ENCODE measurements at regions of chr10 and their contacts with region 1.

Region 1: DNA sequence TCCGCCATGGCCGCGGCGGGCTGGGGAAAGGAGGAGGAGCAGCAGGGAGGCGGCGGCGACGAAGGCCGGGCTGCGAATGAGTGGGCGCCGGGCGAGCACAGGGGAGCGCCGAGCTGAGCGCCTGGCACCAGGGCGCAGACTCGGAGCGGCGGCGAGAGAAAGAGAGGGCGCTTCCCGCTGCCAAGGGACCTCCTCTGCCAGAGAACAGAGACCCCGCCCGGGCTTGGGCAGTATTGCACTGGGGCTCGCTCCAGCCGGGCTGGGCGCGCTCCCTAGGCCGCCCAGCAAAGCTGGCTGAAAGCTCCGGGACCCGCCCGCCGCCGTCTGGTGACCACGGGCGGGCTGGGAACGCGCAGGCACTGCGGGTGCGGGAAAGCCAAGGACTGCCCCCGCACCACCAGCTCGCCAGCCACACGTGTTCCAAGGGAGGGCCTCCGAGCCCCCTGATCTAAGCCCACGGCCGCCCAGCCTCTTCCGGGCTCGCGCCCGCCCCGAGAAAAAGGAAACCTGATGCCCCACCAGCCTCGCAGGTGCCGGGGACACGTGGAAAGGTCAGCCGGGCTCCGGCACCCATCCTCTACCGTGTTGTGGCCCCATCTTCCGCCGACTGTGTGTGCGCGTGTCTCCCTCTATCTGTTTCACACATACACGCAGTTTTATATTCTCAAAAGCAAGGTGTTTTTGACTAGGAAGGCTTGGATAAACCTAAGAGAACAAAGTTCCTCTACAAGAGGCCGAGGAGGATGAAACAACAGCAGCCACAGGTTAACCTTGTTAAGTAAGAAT is at the start of gene CCDC6:
- DNase-seq: peak; percentile 91
- ATAC-seq: peak; percentile 81
- H3K4me3 Mint-ChIP-seq: peak within 1 kb of the TSS; percentile 95
- H3K27ac Mint-ChIP-seq: peak within 1 kb of the TSS; percentile 95
- H3K4me1 Mint-ChIP-seq: peaks cover 59% of the 10 kb centered on the region
- H3K27me3 Mint-ChIP-seq: no peaks in the 10 kb centered on the region
- CTCF ChIP-seq: no peak
- total RNA-seq, gene CCDC6: 27.9 and 32.2 TPM in 2 replicates

Region 2: DNA sequence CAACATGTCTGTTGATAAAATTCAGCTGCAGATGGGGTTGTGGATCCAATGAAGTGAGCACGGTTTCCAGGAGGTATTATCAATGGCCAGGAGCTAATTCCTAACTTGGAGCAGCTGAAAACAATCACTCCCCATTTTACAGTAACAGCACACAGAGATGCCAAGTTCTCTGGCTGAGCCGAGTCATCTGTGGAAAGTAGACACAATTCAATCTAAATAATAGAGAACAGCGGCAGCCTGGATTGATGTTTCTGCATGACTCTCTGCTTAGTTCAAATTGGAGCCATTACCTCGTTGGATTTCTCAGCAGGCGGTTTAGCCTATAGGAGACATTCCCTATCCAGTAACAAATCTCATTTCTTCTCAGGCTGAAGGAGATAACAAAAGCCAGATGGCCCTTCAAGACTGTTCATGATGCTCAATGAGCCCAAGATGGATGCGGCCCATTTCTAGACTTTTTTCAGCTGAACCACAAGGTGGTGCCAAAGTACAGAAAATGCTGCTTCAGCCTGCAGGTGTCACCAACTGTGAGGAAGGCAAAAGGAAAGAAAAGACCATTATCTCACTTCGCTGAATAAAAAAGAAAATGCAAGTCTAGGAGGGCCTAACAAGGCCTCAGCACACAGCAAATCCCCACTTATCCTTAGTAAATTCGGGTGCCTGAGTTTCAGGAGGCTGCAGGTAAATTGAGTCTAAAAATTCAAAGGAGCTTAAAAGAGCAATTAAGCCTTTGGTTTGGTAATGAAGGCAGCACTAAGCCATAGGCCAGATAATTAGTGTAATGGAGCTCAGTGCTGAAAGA is 280.7 kb before region 1 on chr10:
- CTCF ChIA-PET with region 1: interaction called, 7 read pairs
- POLR2A ChIA-PET with region 1: no interaction called
- intact Hi-C with region 1: loop called (anchors 1 kb)
- DNase-seq: no peak
- ATAC-seq: peak; percentile 85
- H3K4me3 Mint-ChIP-seq: no peak overlapping the region
- H3K27ac Mint-ChIP-seq: no peak overlapping the region
- H3K4me1 Mint-ChIP-seq: peaks cover 3% of the 10 kb centered on the region
- H3K27me3 Mint-ChIP-seq: no peaks in the 10 kb centered on the region
- CTCF ChIP-seq: peak; percentile 42

Region 3: DNA sequence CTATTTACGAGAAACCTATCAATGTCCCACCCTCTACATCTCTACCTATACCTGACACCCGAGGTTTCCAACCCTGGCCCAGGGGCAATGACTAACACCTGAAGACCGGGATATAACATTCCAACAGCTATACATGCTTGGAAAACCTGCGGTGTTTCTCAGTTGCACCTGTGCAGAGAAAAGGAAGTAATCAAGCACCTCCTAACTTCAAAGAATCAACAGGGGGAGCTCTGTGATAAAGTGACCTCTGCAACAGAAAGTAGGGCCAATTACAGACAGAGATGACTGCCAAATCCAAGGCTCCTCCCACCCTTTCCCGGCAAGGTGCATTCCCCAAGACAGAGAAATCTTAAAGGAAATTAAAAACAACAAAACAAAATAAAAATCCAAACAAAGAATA is 41.5 kb before region 1 on chr10:
- CTCF ChIA-PET with region 1: interaction called, 125 read pairs
- POLR2A ChIA-PET with region 1: interaction called, 59 read pairs
- intact Hi-C with region 1: loop called (anchors 1 kb)
- DNase-seq: no peak
- ATAC-seq: peak; percentile 76
- H3K4me3 Mint-ChIP-seq: no peak overlapping the region
- H3K27ac Mint-ChIP-seq: peak overlapping the region; percentile 82
- H3K4me1 Mint-ChIP-seq: peaks cover 69% of the 10 kb centered on the region
- H3K27me3 Mint-ChIP-seq: no peaks in the 10 kb centered on the region
- CTCF ChIP-seq: no peak

Region 4: GRCh38 chr10:59894114-59894513 is 12.5 kb before region 1 on chr10:
- CTCF ChIA-PET with region 1: interaction called, 7 read pairs
- POLR2A ChIA-PET with region 1: interaction called, 26 read pairs
- intact Hi-C with region 1: loop called (anchors 1 kb)
- DNase-seq: no peak
- ATAC-seq: no peak
- H3K4me3 Mint-ChIP-seq: no peak overlapping the region
- H3K27ac Mint-ChIP-seq: peak overlapping the region; percentile 18
- H3K4me1 Mint-ChIP-seq: peaks cover 77% of the 10 kb centered on the region
- H3K27me3 Mint-ChIP-seq: no peaks in the 10 kb centered on the region
- CTCF ChIP-seq: no peak

Region 5: GRCh38 chr10:59917922-59918321 is 11.3 kb after region 1 on chr10:
- CTCF ChIA-PET with region 1: no interaction called
- POLR2A ChIA-PET with region 1: no interaction called
- intact Hi-C with region 1: no loop called
- DNase-seq: no peak
- ATAC-seq: no peak
- H3K4me3 Mint-ChIP-seq: no peak overlapping the region
- H3K27ac Mint-ChIP-seq: no peak overlapping the region
- H3K4me1 Mint-ChIP-seq: no peaks in the 10 kb centered on the region
- H3K27me3 Mint-ChIP-seq: peaks cover 4% of the 10 kb centered on the region
- CTCF ChIP-seq: no peak

Region 6: DNA sequence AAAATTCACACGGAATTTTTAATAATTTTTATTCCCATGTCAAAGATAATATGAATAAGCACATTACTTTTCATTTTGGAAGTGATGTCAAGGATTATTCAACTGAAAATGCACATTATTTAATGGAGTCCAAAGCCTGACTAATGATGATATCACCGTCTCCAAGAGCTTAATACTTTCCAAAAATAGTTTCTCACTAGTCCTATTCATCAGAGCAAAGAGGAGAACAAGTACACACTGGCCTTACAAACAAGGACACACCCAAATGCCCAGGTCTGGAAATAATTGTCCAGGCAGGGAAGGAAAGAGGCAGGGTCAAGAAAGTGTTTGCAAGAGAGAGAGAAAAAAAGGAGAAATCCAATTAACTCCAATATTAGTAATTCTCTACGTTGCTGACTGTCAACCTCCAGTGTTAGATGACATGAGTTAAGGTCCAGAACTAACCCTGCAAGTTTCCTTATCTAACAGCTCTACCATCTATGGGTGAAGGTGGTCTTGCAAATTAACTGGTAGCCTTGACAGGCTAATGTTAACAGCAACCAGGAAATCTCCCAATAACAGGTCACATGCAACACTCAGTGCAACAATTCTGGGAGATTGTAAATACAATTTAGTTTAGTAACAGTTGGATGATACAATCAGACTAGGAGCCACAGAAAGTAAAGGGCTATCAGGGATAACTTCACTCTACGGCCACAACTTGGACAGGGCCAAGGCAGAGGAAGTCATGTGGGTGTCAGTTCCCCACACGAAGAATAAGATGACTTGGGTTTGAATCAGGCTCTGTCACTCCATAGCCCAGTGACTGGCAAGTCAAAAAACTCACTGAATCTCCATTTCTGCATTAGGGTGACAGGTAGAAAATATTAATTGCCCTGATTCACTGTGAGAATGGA is 216.8 kb after region 1 on chr10:
- CTCF ChIA-PET with region 1: no interaction called
- POLR2A ChIA-PET with region 1: no interaction called
- intact Hi-C with region 1: no loop called
- DNase-seq: no peak
- ATAC-seq: no peak
- H3K4me3 Mint-ChIP-seq: no peak overlapping the region
- H3K27ac Mint-ChIP-seq: no peak overlapping the region
- H3K4me1 Mint-ChIP-seq: no peaks in the 10 kb centered on the region
- H3K27me3 Mint-ChIP-seq: no peaks in the 10 kb centered on the region
- CTCF ChIP-seq: no peak

Region 7: DNA sequence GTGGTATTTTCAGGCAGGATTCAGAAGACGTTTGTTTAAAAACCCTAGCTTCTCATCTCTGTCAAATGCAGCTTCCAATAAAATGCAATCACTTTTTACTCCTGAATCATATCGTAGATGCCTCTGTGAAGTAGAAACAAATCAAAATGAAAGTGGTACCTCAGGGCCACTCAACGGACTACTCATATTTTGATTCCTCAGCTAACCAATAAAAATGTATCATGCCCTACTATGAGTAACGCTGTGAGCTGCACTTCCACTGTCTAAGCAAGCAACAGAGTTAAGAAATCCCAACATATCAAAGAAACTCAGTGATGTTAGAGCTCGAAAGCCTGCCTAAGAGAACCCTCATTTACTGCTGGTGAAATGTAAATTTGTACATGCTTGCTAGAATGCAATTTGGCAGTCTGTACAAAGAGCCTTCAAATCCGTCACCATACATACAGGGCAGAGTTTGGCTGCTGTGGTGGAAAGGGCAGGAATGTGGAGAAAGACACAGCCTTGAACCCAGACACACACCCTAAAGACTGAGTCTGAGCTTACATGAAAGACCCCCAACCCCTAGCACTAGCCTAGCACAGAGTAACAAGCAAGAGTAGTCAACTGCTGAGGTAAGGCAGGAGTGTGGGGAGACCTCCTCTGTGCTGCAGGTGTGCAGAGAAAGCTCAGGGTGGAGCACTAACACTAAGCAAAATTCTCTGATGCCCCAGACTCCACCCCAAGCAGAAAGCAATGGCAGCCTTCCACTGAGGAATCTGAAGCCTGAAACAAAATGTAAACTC is 331.6 kb after region 1 on chr10:
- CTCF ChIA-PET with region 1: no interaction called
- POLR2A ChIA-PET with region 1: interaction called, 19 read pairs
- intact Hi-C with region 1: loop called (anchors 1 kb)
- DNase-seq: peak; percentile 23
- ATAC-seq: peak; percentile 51
- H3K4me3 Mint-ChIP-seq: peak overlapping the region; percentile 67
- H3K27ac Mint-ChIP-seq: peak overlapping the region; percentile 93
- H3K4me1 Mint-ChIP-seq: peaks cover 61% of the 10 kb centered on the region
- H3K27me3 Mint-ChIP-seq: no peaks in the 10 kb centered on the region
- CTCF ChIP-seq: no peak

Region 8: DNA sequence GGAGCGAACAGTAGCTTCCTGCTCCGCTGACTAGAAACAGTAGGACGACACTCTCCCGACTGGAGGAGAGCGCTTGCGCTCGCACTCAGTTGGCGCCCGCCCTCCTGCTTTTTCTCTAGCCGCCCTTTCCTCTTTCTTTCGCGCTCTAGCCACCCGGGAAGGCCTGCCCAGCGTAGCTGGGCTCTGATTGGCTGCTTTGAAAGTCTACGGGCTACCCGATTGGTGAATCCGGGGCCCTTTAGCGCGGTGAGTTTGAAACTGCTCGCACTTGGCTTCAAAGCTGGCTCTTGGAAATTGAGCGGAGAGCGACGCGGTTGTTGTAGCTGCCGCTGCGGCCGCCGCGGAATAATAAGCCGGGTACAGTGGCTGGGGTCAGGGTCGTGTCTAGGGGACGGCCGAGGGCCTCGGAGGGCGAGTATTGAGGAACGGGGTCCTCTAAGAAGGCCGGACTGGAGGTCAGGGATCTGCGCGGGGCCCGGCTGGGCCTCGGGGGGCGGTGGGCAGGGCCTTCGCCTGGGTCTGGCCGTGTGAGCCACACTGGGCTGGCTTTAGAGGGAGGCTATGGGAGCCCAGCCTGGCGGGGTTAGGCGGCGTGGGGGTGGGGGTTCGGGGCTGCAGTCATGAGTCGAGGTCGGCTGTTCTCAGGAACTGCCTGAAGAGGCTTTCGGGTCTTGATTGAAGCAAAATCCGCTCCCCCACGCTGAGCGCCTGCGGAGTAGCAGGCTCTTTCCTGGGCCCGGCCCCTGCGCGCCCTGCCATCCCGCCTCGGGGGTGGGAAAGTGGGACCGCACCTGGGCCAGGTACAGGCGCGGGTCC is 871.8 kb after region 1 on chr10 and contains the start of gene CDK1:
- CTCF ChIA-PET with region 1: no interaction called
- POLR2A ChIA-PET with region 1: interaction called, 4 read pairs
- intact Hi-C with region 1: loop called (anchors 5 kb)
- DNase-seq: peak; percentile 86
- ATAC-seq: peak; percentile 99
- H3K4me3 Mint-ChIP-seq: peak within 1 kb of the TSS; percentile 96
- H3K27ac Mint-ChIP-seq: peak within 1 kb of the TSS; percentile 84
- H3K4me1 Mint-ChIP-seq: peaks cover 17% of the 10 kb centered on the region
- H3K27me3 Mint-ChIP-seq: peaks cover 3% of the 10 kb centered on the region
- CTCF ChIP-seq: no peak
- total RNA-seq, gene CDK1: 1.5 and 1.9 TPM in 2 replicates

Region 9: GRCh38 chr10:60932756-60933155 is 1026.1 kb after region 1 on chr10:
- CTCF ChIA-PET with region 1: no interaction called
- POLR2A ChIA-PET with region 1: no interaction called
- intact Hi-C with region 1: no loop called
- DNase-seq: no peak
- ATAC-seq: no peak
- H3K4me3 Mint-ChIP-seq: no peak overlapping the region
- H3K27ac Mint-ChIP-seq: no peak overlapping the region
- H3K4me1 Mint-ChIP-seq: no peaks in the 10 kb centered on the region
- H3K27me3 Mint-ChIP-seq: peaks cover 2% of the 10 kb centered on the region
- CTCF ChIP-seq: no peak

Measured in activated B cell treated with CpG ODN at 0.5 μM for 24 hours (primary cell).